ENCODE measurements at regions of chr22 and their contacts with region 1.

Region 1: DNA sequence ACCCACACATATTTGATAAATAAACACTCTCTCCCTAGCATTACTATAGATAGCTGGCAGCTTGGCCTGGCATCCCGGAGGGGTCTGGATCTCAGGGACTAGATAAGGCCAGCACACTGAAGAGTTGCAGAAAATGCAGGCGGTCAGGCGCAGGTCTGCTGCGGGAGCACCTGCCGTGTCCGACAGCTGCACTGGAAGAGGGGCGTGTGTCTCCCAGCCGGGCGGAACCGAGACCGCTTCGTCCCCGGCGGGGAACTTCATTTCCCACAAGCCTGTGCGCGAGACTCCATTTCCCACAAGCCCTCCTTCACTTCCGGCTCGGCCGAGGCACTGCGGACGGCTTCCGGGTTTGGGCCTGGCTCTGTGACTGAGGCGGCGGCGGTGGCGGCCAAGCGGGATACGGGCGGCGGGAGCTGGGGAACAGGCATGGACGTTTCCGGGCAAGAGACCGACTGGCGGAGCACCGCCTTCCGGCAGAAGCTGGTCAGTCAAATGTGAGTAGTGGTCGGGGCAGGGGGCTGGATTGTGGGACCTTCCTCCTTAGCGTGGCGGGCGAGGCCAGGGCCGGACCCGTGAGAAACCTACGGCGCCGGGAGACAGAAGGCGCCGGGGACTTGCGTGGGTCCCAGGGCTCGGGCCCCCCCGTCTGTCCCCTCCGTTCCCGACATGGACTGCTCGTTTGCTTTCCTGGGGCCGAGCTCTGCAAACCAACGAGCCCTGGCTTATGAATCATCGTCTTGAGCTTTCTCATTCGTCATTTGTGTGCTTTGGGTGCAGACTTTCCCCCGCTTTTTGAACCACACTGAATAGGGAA is at the start of gene MED15:
- DNase-seq: peak; percentile 99 to 100 (median 100)
- ATAC-seq: peak; percentile 93
- H3K4me3 ChIP-seq: peak within 1 kb of the TSS; percentile 53
- H3K27ac ChIP-seq: peak within 1 kb of the TSS; percentile 82
- H3K4me1 ChIP-seq: peaks cover 45 to 47% of the 10 kb centered on the region in 2 experiments
- H3K27me3 ChIP-seq: no peaks in the 10 kb centered on the region
- CTCF ChIP-seq: peak in 2 of 3 experiments; percentile 6 to 23; a peak in 3 of 6 replicates
- EP300 ChIP-seq: peak; percentile 82
- POLR2A ChIP-seq: no peak
- RAD21 ChIP-seq: peak in 1 of 2 experiments; percentile 40; a peak in 2 of 4 replicates
- polyA plus RNA-seq, gene MED15: 4.0 to 5.2 TPM

Region 2: DNA sequence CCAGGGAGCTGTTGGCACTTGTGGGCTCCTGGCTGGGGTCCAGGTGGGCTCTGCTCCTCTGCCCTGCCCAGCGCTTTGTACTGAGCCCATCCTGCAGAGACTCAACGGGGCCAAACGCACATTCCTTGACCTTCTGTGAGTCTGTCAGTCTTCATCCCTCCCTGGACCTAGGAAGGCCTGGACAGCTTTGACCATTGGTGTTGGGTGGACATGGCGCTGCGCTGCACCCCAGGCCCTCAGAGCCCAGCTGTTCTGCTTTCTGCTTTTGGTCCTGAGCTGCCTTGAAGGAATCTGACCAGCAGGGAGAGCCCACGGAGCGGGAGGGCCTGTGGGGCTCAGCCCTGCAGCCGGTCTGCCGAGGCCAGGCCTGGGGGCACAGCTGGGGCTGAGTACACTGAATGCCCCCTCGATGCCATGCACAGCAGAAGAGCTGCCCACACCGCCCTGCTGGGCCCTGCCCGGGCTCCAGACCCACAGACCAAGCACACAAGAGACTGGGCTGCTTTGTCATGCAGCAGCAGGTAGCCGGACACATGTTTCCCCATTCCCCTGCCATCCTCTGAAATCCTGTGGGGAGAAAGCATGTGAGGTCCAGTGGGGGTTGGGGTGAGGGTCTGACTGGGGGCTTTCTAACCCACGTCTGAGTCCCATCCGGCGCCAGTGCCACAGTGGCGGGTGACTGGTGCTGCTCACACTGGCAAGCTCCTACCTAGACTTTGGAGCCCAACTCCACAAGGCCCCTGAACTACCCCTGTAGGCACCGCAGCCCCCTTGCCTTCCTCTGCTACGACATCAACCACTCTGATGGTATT is 332.5 kb before region 1 on chr22:
- CTCF ChIA-PET with region 1: no interaction called
- POLR2A ChIA-PET with region 1: no interaction called
- in situ Hi-C with region 1: no loop called
- intact Hi-C with region 1: no loop called
- DNase-seq: peak in 2 of 4 experiments; percentile 63 to 73
- ATAC-seq: peak; percentile 81
- H3K4me3 ChIP-seq: no peak overlapping the region
- H3K27ac ChIP-seq: no peak overlapping the region
- H3K4me1 ChIP-seq: peaks cover 0 to 57% of the 10 kb centered on the region in 2 experiments; a peak in 1 of 5 replicates
- H3K27me3 ChIP-seq: peaks cover 83 to 98% of the 10 kb centered on the region in 2 experiments; a peak in 4 of 5 replicates
- CTCF ChIP-seq: peak; percentile 68 to 86 (median 74)
- EP300 ChIP-seq: no peak
- POLR2A ChIP-seq: no peak
- RAD21 ChIP-seq: peak in 1 of 2 experiments; percentile 87; a peak in 2 of 4 replicates

Region 3: GRCh38 chr22:20463324-20464095 is 44.0 kb before region 1 on chr22:
- CTCF ChIA-PET with region 1: no interaction called
- POLR2A ChIA-PET with region 1: interaction called, 21 read pairs
- in situ Hi-C with region 1: no loop called
- intact Hi-C with region 1: no loop called
- DNase-seq: no peak
- ATAC-seq: no peak
- H3K4me3 ChIP-seq: no peak overlapping the region
- H3K27ac ChIP-seq: no peak overlapping the region
- H3K4me1 ChIP-seq: peaks cover 0 to 3% of the 10 kb centered on the region in 2 experiments; a peak in 2 of 5 replicates
- H3K27me3 ChIP-seq: peaks cover 15 to 25% of the 10 kb centered on the region in 2 experiments; a peak in 4 of 5 replicates
- CTCF ChIP-seq: no peak
- EP300 ChIP-seq: no peak
- POLR2A ChIP-seq: no peak
- RAD21 ChIP-seq: no peak

Region 4: DNA sequence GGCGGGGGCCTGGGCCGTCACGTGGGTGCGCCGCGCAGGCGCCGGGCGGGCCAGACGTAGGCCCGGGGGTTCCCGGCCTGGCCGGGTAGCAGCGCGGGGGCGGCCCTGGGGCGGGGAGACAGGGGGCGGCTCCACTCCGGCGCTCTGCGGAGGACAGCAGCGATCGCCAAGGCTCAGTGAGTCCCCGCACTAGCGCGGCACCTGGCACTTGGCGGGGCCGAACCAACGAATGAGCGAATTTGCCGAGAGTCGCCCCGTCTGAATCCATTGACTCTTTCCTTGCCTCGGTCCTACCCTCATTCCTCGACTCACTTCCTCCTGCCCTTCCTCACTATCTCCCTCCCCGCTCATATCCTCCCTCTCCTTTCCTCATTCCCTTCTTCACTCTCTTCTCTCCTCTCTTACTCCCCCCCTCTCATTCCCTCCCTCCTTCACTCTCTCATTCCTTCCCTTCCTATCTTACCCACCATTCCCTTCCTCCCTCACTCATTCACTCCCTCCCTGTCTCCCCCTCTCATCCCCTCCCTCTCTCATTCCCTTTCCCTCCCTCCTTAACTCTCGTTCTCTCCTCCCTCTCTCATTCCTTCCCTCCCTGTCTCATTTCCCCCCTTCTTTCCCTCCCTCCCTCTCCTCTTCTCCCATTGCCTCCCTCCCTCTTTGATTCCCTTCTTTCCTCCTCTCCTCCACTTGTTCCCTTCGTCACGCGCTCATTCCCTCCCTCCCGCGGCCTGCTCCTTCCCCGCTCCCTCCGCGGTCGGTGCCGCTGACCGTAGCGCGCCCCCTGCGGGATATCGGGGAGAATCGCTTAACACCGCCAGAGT is 11.4 kb before region 1 on chr22:
- CTCF ChIA-PET with region 1: interaction called, 4 read pairs
- POLR2A ChIA-PET with region 1: interaction called, 15 read pairs
- in situ Hi-C with region 1: no loop called
- intact Hi-C with region 1: loop called (anchors 1 kb)
- DNase-seq: peak; percentile 100
- ATAC-seq: peak; percentile 97
- H3K4me3 ChIP-seq: peak overlapping the region; percentile 46
- H3K27ac ChIP-seq: peak overlapping the region; percentile 81
- H3K4me1 ChIP-seq: peaks cover 15 to 40% of the 10 kb centered on the region in 2 experiments
- H3K27me3 ChIP-seq: no peaks in the 10 kb centered on the region; a peak in 1 of 5 replicates
- CTCF ChIP-seq: peak; percentile 99 to 100 (median 99)
- EP300 ChIP-seq: peak; percentile 77
- POLR2A ChIP-seq: no peak
- RAD21 ChIP-seq: peak; percentile 92 to 98

Region 5: DNA sequence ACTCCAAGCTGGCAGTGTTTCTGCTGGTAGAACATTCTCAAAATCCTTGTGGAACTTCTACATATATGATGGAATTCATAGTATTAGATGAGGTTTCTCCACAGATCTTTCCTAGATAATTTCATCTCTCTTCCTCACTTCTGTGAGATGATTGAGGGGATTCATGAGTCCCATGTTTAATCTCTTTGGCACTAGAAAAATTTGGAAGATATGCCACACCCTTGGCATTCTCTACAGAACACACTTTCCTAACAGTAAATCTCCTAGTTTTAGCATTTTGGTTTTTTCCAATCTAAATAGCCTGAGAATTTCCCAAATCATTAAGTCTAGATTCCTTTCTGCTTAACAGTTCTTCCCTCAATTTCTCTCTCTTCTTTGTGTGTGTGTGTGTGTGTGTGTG is 35.3 kb after region 1 on chr22:
- CTCF ChIA-PET with region 1: no interaction called
- POLR2A ChIA-PET with region 1: interaction called, 1,693 read pairs
- in situ Hi-C with region 1: no loop called
- intact Hi-C with region 1: loop called (anchors 5 kb)
- DNase-seq: no peak
- ATAC-seq: no peak
- H3K4me3 ChIP-seq: no peak overlapping the region
- H3K27ac ChIP-seq: no peak overlapping the region
- H3K4me1 ChIP-seq: peaks cover 17 to 20% of the 10 kb centered on the region in 2 experiments
- H3K27me3 ChIP-seq: no peaks in the 10 kb centered on the region
- CTCF ChIP-seq: no peak
- EP300 ChIP-seq: no peak
- POLR2A ChIP-seq: no peak
- RAD21 ChIP-seq: no peak

Region 6: DNA sequence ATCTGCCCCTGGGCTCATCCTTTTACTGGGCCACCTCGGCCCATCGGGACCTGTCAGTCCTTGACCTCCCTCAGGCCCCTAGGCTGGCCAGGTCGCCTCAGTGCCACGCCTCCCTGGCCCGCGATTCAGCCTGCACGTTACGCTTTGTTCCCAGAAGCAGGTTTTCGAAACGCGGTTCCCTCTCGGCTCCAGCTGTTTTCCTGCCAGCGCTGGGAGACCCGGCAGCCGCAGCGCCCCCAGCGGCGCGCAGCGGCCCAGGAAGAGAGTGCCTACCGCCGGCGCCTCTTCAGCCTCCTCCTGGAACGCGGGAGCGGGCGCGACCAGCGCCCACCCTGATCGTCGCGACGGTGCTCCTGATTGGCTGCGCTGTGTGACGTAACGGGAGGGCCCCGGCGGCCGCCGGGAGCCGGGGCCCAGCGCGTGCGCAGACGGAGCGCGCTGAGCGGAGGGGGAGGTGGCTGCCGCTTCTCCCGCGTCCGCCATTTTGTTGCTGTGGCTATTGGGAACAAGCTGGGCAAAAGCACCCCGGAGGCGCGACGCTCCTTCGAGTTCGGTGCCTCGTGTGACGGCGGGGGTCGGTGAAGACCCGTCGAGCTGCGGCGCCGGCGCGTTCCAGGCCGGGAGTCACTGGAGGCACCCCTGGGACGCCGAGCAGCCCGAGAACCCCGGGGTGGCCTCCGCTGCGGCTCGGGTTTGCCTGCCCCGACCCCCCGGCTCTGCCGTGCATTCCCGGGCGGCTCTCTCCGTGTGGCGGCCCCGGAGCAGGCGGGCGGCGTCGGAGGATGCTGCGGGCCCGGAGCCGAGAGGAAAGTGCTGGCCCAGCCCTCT is 409.7 kb after region 1 on chr22 and contains the start of gene CRKL:
- CTCF ChIA-PET with region 1: no interaction called
- POLR2A ChIA-PET with region 1: interaction called, 3 read pairs
- in situ Hi-C with region 1: no loop called
- intact Hi-C with region 1: loop called (anchors 10 kb)
- DNase-seq: peak; percentile 100
- ATAC-seq: peak; percentile 93
- H3K4me3 ChIP-seq: peak within 1 kb of the TSS; percentile 67
- H3K27ac ChIP-seq: peak within 1 kb of the TSS; percentile 89
- H3K4me1 ChIP-seq: peaks cover 20 to 41% of the 10 kb centered on the region in 2 experiments
- H3K27me3 ChIP-seq: no peaks in the 10 kb centered on the region
- CTCF ChIP-seq: peak; percentile 99 to 100 (median 100)
- EP300 ChIP-seq: peak; percentile 88
- POLR2A ChIP-seq: no peak
- RAD21 ChIP-seq: no peak
- polyA plus RNA-seq, gene CRKL: 100 to 105 TPM